CD4-positive, alpha-beta T cell (primary cell): ENCODE measurements at regions of chr17 and their contacts with region 1.

Region 1: GRCh38 chr17:14514983-14515382 is 214.1 kb downstream of the HS3ST3B1 start:
- DNase-seq: no peak
- ATAC-seq: no peak
- H3K4me3 ChIP-seq: no peak overlapping the region
- H3K4me3 Mint-ChIP-seq: no peak overlapping the region
- H3K27ac ChIP-seq: no peak overlapping the region
- H3K27ac Mint-ChIP-seq: no peak overlapping the region
- H3K4me1 ChIP-seq: no peaks in the 10 kb centered on the region
- H3K4me1 Mint-ChIP-seq: no peaks in the 10 kb centered on the region
- H3K27me3 ChIP-seq: no peaks in the 10 kb centered on the region
- H3K27me3 Mint-ChIP-seq: no peaks in the 10 kb centered on the region
- CTCF ChIP-seq: no peak

Region 2: DNA sequence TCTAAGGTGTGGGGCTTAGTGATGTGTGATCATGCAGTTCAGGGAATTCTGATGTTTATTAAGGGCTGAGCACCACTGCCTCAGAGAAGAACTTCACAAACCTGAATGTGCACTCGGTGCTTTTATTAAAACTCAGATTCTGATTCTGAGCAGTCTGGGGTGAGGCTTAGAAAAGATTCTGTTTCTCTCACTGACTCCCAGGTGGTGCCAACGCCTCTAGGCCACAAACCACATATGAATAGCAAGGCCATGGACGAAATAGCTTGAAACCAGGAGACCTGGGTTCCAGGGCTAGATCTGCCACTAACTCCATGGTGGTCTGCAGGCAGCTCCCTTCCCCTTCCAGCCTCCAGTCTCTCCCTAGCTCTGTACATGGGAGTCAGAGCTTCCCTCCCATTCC is 45.0 kb before region 1 on chr17:
- CTCF ChIA-PET with region 1: no interaction called
- POLR2A ChIA-PET with region 1: no interaction called
- intact Hi-C with region 1: loop called in 1 of 2 experiments (anchors 5 kb)
- DNase-seq: no peak
- ATAC-seq: no peak
- H3K4me3 ChIP-seq: no peak overlapping the region
- H3K4me3 Mint-ChIP-seq: no peak overlapping the region
- H3K27ac ChIP-seq: no peak overlapping the region
- H3K27ac Mint-ChIP-seq: no peak overlapping the region
- H3K4me1 ChIP-seq: no peaks in the 10 kb centered on the region
- H3K4me1 Mint-ChIP-seq: no peaks in the 10 kb centered on the region
- H3K27me3 ChIP-seq: no peaks in the 10 kb centered on the region
- H3K27me3 Mint-ChIP-seq: no peaks in the 10 kb centered on the region
- CTCF ChIP-seq: no peak

Region 3: GRCh38 chr17:14525551-14526455 is 10.8 kb after region 1 on chr17:
- CTCF ChIA-PET with region 1: no interaction called
- POLR2A ChIA-PET with region 1: no interaction called
- intact Hi-C with region 1: no loop called
- DNase-seq: peak in 1 of 14 experiments; percentile 4
- ATAC-seq: no peak
- H3K4me3 ChIP-seq: no peak overlapping the region
- H3K4me3 Mint-ChIP-seq: no peak overlapping the region
- H3K27ac ChIP-seq: no peak overlapping the region
- H3K27ac Mint-ChIP-seq: no peak overlapping the region
- H3K4me1 ChIP-seq: no peaks in the 10 kb centered on the region
- H3K4me1 Mint-ChIP-seq: peaks cover 17% of the 10 kb centered on the region
- H3K27me3 ChIP-seq: no peaks in the 10 kb centered on the region
- H3K27me3 Mint-ChIP-seq: no peaks in the 10 kb centered on the region
- CTCF ChIP-seq: no peak